Motor neuron (in vitro differentiated cells): ENCODE measurements at regions of chr22 and their contacts with region 1.

Region 1: GRCh38 chr22:31661851-31662656 is at the start of gene PISD:
- ATAC-seq: peak; percentile 75 to 99 (median 97)
- H3K4me3 ChIP-seq: peak within 1 kb of the TSS; percentile 71 to 97 (median 93)
- H3K27ac ChIP-seq: peak within 1 kb of the TSS; percentile 67 to 72
- H3K4me1 ChIP-seq: peaks cover 4 to 6% of the 10 kb centered on the region in 2 donors
- total RNA-seq, gene PISD: 23.7 to 32.4 (median 26.5) TPM

Region 2: GRCh38 chr22:31970490-31971444 is 308.7 kb after region 1 on chr22:
- in situ Hi-C with region 1: loop called in 2 of 9 experiments (anchors 25 kb)
- ATAC-seq: peak; percentile 85 to 94 (median 88)
- H3K4me3 ChIP-seq: peak overlapping the region; percentile 31 to 48 (median 37)
- H3K27ac ChIP-seq: no peak overlapping the region
- H3K4me1 ChIP-seq: no peaks in the 10 kb centered on the region